ENCODE measurements at regions of chr15 and their contacts with region 1.

Region 1: GRCh38 chr15:52780172-52780980 is 9.8 kb downstream of the ONECUT1 start:
- DNase-seq: peak; percentile 56
- ATAC-seq: peak; percentile 49 to 60

Region 2: GRCh38 chr15:53197426-53197839 is 417.1 kb after region 1 on chr15:
- intact Hi-C with region 1: loop called (anchors 2 to 5 kb)
- DNase-seq: peak; percentile 53
- ATAC-seq: peak; percentile 44 to 68

Region 3: DNA sequence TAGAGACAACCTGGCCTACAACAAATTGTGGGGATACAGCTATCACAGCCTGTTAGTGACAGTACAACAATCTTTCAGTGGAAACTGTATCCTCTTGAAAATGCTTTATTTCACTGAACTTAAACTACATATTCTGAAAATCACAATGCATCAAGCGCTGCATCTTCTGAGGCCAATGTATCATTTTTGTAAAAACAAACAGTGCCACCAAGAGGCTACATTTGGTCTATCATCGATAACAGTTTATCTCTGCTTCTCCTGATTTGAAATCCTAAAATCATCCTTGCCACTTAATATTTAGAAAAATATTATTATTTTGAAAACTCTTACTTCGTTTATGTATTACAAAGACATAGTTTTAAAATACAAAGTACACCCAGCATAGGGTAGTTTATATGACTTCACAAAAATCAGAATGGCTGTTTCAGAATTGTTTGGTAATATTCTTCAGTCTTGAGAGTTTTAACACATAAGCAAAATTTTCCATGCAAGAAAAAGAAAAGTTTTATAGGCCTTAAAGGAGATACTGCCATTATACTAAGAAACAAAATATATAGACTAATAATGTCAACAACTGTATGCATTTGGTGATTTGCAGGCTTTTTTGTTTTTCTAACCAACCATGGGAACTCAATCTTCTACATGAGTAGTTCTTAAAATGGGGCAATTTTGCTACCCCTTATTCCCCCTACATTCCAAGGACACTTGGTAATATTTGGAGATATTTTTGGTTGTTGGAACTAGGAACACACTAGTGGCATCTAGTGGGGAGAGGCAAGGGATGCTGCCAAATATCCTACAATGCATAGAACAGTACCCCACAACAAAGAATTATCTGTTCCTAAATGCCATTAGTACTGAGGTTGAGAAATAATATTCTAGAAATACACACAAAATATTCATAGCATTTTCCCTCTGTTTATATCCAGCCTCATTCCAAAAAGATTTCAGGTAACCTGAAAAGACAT is 936.8 kb after region 1 on chr15:
- intact Hi-C with region 1: loop called (anchors 5 to 10 kb)
- DNase-seq: no peak
- ATAC-seq: no peak